Spleen (tissue), 13 donors: ENCODE measurements at regions of chr11 and their contacts with region 1.

Region 1: GRCh38 chr11:102287964-102288724 is 29.1 kb upstream of the BIRC3 start:
- DNase-seq: no peak
- H3K4me3 ChIP-seq: peak overlapping the region in 5 of 8 donors; percentile 12 to 52 (median 18)
- H3K27ac ChIP-seq: peak overlapping the region in 2 of 8 donors; percentile 3 to 48
- H3K4me1 ChIP-seq: peaks cover 0 to 37% (median 23%) of the 10 kb centered on the region in 6 donors
- H3K27me3 ChIP-seq: no peaks in the 10 kb centered on the region
- CTCF ChIP-seq: peak; percentile 62 to 88 (median 76)
- POLR2A ChIP-seq: no peak

Region 2: GRCh38 chr11:102341844-102342318 is 53.7 kb after region 1 on chr11:
- intact Hi-C with region 1: loop called (anchors 5 kb)
- DNase-seq: no peak
- H3K4me3 ChIP-seq: no peak overlapping the region
- H3K27ac ChIP-seq: peak overlapping the region in 2 of 8 donors; percentile 15 to 17
- H3K4me1 ChIP-seq: peaks cover 0 to 39% (median 15%) of the 10 kb centered on the region in 6 donors
- H3K27me3 ChIP-seq: no peaks in the 10 kb centered on the region
- CTCF ChIP-seq: peak; percentile 68 to 90 (median 83)
- POLR2A ChIP-seq: no peak

Region 3: GRCh38 chr11:102495161-102496042 is 207.3 kb after region 1 on chr11:
- intact Hi-C with region 1: loop called (anchors 5 kb)
- DNase-seq: no peak
- H3K4me3 ChIP-seq: no peak overlapping the region
- H3K27ac ChIP-seq: no peak overlapping the region
- H3K4me1 ChIP-seq: peaks cover 0 to 10% (median 1%) of the 10 kb centered on the region in 6 donors
- H3K27me3 ChIP-seq: no peaks in the 10 kb centered on the region
- CTCF ChIP-seq: peak; percentile 59 to 86 (median 79)
- POLR2A ChIP-seq: no peak